ENCODE measurements at regions of chr1 and their contacts with region 1.

Region 1: DNA sequence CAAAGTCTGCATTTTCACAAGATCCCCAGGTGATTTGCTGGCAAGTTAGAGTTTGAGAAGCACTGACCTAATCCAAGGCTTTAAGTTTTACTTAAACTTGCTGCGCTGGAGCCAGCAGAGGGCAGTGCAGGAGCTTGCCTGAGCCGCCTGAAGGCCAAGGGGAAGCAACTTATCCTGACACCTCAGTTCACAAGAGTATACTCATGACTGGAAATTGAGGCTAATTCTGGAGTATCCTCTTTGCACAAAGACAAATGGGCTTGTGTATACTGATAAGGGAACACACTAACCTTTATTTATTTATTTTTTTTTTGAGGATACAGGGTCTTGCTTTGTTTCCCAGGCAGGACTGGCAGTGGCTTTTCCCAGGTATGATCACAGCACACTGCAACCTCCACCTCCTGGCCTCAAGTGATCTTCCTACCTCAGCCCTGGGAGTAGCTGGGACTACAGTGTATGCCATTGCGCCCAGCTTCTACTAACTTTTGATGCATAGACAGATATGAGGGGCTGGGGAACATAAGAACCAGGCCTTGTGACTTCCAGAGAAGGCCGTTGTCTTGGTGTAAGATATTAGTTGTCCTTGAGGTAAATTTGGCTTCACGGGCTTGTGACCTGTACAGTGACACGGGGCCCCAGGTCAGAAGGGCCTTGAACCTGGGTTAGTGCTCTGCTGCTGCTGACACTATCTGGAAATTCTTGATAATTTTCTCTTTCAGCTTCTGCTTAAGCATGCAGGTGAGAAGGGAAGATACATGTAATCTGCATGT is 29.0 kb upstream of the SLAMF1 start:
- DNase-seq: peak; percentile 89
- ATAC-seq: peak; percentile 70
- H3K4me3 Mint-ChIP-seq: peak overlapping the region; percentile 26
- H3K27ac Mint-ChIP-seq: peak overlapping the region; percentile 48
- H3K4me1 Mint-ChIP-seq: peaks cover 42% of the 10 kb centered on the region
- H3K27me3 Mint-ChIP-seq: no peaks in the 10 kb centered on the region

Region 2: GRCh38 chr1:160277330-160277729 is 398.5 kb before region 1 on chr1:
- CTCF ChIA-PET with region 1: no interaction called
- POLR2A ChIA-PET with region 1: no interaction called
- intact Hi-C with region 1: no loop called
- DNase-seq: no peak
- ATAC-seq: no peak
- H3K4me3 Mint-ChIP-seq: no peak overlapping the region
- H3K27ac Mint-ChIP-seq: no peak overlapping the region
- H3K4me1 Mint-ChIP-seq: no peaks in the 10 kb centered on the region
- H3K27me3 Mint-ChIP-seq: no peaks in the 10 kb centered on the region

Region 3: GRCh38 chr1:160460683-160461287 is 215.0 kb before region 1 on chr1:
- CTCF ChIA-PET with region 1: interaction called, 3 read pairs
- POLR2A ChIA-PET with region 1: no interaction called
- intact Hi-C with region 1: loop called in 1 of 2 experiments (anchors 5 kb)
- DNase-seq: peak; percentile 60
- ATAC-seq: peak; percentile 60
- H3K4me3 Mint-ChIP-seq: peak overlapping the region; percentile 57
- H3K27ac Mint-ChIP-seq: peak overlapping the region; percentile 98
- H3K4me1 Mint-ChIP-seq: peaks cover 85% of the 10 kb centered on the region
- H3K27me3 Mint-ChIP-seq: no peaks in the 10 kb centered on the region

Region 4: GRCh38 chr1:160629286-160630210 is 46.3 kb before region 1 on chr1:
- CTCF ChIA-PET with region 1: interaction called, 48 read pairs
- POLR2A ChIA-PET with region 1: interaction called, 9 read pairs
- intact Hi-C with region 1: loop called in 1 of 2 experiments (anchors 1 kb)
- DNase-seq: peak; percentile 83
- ATAC-seq: peak; percentile 22
- H3K4me3 Mint-ChIP-seq: peak overlapping the region; percentile 65
- H3K27ac Mint-ChIP-seq: peak overlapping the region; percentile 99
- H3K4me1 Mint-ChIP-seq: peaks cover 97% of the 10 kb centered on the region
- H3K27me3 Mint-ChIP-seq: no peaks in the 10 kb centered on the region

Region 5: GRCh38 chr1:160653620-160654016 is 22.2 kb before region 1 on chr1:
- CTCF ChIA-PET with region 1: interaction called, 61 read pairs
- POLR2A ChIA-PET with region 1: interaction called, 3 read pairs
- intact Hi-C with region 1: loop called in 1 of 2 experiments (anchors 2 kb)
- DNase-seq: no peak
- ATAC-seq: no peak
- H3K4me3 Mint-ChIP-seq: no peak overlapping the region
- H3K27ac Mint-ChIP-seq: no peak overlapping the region
- H3K4me1 Mint-ChIP-seq: peaks cover 89% of the 10 kb centered on the region
- H3K27me3 Mint-ChIP-seq: no peaks in the 10 kb centered on the region

Region 6: DNA sequence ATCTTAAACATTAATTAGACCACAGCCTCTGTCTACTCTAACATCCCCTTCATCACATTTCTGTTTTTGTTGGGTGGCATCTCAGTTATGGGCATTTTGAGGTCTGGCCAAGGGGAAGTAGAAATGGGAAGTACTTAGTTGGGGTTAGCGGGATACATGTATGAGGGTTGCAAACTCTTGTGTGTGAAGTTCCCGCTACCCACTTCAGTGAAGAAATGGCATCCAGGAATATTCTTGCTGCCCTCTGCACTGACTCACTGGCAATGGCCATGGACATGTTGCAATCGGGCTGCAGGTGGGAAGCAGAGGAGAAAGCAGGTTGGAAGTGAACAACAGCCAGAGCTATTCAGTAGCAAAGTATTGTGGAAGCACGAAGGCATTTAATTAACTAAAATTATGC is 28.4 kb after region 1 on chr1:
- CTCF ChIA-PET with region 1: interaction called, 59 read pairs
- POLR2A ChIA-PET with region 1: no interaction called
- intact Hi-C with region 1: no loop called
- DNase-seq: no peak
- ATAC-seq: no peak
- H3K4me3 Mint-ChIP-seq: no peak overlapping the region
- H3K27ac Mint-ChIP-seq: peak overlapping the region; percentile 70
- H3K4me1 Mint-ChIP-seq: peaks cover 68% of the 10 kb centered on the region
- H3K27me3 Mint-ChIP-seq: no peaks in the 10 kb centered on the region

Region 7: GRCh38 chr1:160768295-160768657 is 92.5 kb after region 1 on chr1:
- CTCF ChIA-PET with region 1: interaction called, 103 read pairs
- POLR2A ChIA-PET with region 1: interaction called, 5 read pairs
- intact Hi-C with region 1: loop called (anchors 1 kb)
- DNase-seq: peak; percentile 93
- ATAC-seq: peak; percentile 77
- H3K4me3 Mint-ChIP-seq: peak overlapping the region; percentile 75
- H3K27ac Mint-ChIP-seq: peak overlapping the region; percentile 99
- H3K4me1 Mint-ChIP-seq: peaks cover 44% of the 10 kb centered on the region
- H3K27me3 Mint-ChIP-seq: no peaks in the 10 kb centered on the region

Region 8: GRCh38 chr1:160830321-160831153 is 154.7 kb after region 1 on chr1:
- CTCF ChIA-PET with region 1: interaction called, 33 read pairs
- POLR2A ChIA-PET with region 1: no interaction called
- intact Hi-C with region 1: loop called in 1 of 2 experiments (anchors 1 kb)
- DNase-seq: peak; percentile 92
- ATAC-seq: peak; percentile 83
- H3K4me3 Mint-ChIP-seq: no peak overlapping the region
- H3K27ac Mint-ChIP-seq: peak overlapping the region; percentile 44
- H3K4me1 Mint-ChIP-seq: peaks cover 18% of the 10 kb centered on the region
- H3K27me3 Mint-ChIP-seq: no peaks in the 10 kb centered on the region

Measured in activated CD4-positive, alpha-beta T cell treated with anti-CD3 and anti-CD28 coated beads for 36 hours (primary cell).